ENCODE measurements at regions of chr6 and their contacts with region 1.

Region 1: DNA sequence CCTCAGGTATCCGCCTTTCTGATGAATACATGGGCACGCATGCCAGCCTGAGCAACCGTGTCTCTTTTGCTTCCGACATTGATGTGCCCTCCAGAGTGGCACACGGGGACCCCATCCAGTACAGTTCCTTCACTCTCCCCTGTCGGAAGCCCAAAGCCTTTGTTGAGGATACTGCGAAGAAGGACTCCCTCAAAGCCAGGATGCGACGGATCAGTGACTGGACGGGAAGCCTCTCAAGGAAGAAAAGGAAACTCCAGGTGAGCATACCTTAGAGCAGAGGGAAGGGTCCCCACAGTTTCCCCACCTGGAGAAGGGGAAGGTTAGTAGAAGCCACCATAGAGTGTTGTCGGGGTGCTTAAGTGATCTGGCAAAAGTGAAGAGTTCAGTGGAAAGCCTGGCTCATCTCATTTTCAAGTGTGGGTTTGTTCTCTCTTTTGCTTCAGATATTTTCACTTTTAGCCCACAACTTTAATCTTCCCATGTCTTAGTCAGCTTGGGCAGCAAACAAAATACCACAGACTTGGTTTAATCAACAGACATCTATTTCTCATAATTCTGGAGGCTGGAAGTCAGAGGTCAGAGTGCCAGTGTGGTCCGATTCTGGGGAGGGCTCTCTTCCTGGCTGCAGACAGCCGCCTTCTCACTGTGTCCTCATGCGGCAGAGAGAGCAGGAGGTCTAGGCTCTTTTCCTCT is 133.5 kb upstream of the CLDN20 start:
- DNase-seq: no peak
- ATAC-seq: no peak
- H3K4me3 ChIP-seq: no peak overlapping the region
- H3K27ac ChIP-seq: 0 out of 2 replicates have a peak overlapping the region, but pooled peaks have one; percentile 13
- H3K4me1 ChIP-seq: peaks cover 29% of the 10 kb centered on the region
- H3K27me3 ChIP-seq: no peaks in the 10 kb centered on the region
- CTCF ChIP-seq: no peak

Region 2: DNA sequence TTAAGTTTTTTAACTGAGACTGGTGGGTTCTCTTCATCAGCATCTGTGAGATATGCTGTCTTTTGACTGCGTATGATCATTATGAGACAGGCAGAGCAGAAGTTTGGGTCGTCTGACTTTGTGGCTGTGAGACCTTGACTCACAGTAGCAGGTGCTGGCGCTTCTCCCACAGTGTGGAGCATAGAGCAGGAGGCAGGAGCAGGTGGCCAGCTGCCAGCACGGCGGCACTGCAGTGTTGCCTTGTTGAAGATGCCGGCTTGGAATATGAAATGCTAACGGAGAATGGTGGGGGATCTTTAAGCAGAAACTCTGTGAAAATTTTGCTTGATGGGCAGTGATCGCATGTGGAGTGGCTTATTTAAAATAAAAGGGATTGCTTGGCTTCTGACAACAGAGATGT is 30.2 kb before region 1 on chr6:
- CTCF ChIA-PET with region 1: no interaction called
- POLR2A ChIA-PET with region 1: no interaction called
- in situ Hi-C with region 1: no loop called
- intact Hi-C with region 1: no loop called
- DNase-seq: no peak
- ATAC-seq: peak; percentile 48; the same call in 1 of the 2 replicates
- H3K4me3 ChIP-seq: no peak overlapping the region
- H3K27ac ChIP-seq: no peak overlapping the region
- H3K4me1 ChIP-seq: no peaks in the 10 kb centered on the region; the same call in 1 of the 2 replicates
- H3K27me3 ChIP-seq: no peaks in the 10 kb centered on the region
- CTCF ChIP-seq: no peak

Region 3: GRCh38 chr6:155183095-155183494 is 52.8 kb after region 1 on chr6:
- CTCF ChIA-PET with region 1: interaction called, 10 read pairs
- POLR2A ChIA-PET with region 1: no interaction called
- in situ Hi-C with region 1: no loop called
- intact Hi-C with region 1: no loop called
- DNase-seq: no peak
- ATAC-seq: no peak
- H3K4me3 ChIP-seq: no peak overlapping the region
- H3K27ac ChIP-seq: peak overlapping the region; percentile 92
- H3K4me1 ChIP-seq: peaks cover 28% of the 10 kb centered on the region
- H3K27me3 ChIP-seq: no peaks in the 10 kb centered on the region
- CTCF ChIP-seq: no peak

Region 4: DNA sequence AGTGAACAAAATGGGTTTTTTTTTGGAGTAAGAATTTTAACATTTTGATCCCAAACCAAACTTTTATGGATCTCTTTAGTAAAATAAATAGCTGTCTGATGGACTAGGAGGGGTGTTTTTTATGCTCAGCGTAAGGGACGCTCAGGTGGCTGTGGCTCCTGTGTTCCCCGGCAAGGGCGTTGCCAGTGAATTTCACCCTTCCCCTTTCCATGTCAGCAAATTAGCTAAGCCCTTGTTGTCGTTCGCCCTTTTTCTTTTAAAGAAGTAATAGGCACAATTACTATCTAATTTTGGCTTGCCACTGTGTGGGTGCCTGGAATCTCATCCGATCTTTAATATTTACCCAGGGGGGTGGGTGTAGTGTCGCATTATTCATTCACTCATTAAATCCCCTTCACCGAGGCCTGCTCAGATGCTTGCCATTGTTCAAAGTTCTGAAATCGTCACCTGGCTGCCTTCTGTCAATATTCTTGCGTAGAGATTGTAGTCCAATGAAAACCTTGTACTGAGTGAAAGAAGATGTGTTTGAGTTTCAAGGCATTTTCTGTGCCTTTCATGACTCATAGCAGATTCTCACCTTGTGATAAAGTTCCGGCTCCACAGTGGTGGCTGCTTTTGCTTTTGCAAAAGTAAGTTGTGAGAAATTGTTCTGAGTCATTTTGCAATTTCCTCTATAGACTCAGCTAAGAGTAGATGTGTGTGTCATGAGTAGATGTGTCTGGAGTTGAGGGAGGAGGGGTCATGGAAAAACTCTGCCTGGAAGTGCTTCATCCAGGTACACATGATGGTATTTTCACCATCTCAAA is 93.5 kb after region 1 on chr6:
- CTCF ChIA-PET with region 1: no interaction called
- POLR2A ChIA-PET with region 1: no interaction called
- in situ Hi-C with region 1: no loop called
- intact Hi-C with region 1: no loop called
- DNase-seq: peak; percentile 79
- ATAC-seq: peak; percentile 87
- H3K4me3 ChIP-seq: no peak overlapping the region
- H3K27ac ChIP-seq: peak overlapping the region; percentile 60; the same call in 1 of the 2 replicates
- H3K4me1 ChIP-seq: peaks cover 14% of the 10 kb centered on the region
- H3K27me3 ChIP-seq: no peaks in the 10 kb centered on the region
- CTCF ChIP-seq: no peak